ENCODE measurements at regions of chr3 and their contacts with region 1.

Region 1: DNA sequence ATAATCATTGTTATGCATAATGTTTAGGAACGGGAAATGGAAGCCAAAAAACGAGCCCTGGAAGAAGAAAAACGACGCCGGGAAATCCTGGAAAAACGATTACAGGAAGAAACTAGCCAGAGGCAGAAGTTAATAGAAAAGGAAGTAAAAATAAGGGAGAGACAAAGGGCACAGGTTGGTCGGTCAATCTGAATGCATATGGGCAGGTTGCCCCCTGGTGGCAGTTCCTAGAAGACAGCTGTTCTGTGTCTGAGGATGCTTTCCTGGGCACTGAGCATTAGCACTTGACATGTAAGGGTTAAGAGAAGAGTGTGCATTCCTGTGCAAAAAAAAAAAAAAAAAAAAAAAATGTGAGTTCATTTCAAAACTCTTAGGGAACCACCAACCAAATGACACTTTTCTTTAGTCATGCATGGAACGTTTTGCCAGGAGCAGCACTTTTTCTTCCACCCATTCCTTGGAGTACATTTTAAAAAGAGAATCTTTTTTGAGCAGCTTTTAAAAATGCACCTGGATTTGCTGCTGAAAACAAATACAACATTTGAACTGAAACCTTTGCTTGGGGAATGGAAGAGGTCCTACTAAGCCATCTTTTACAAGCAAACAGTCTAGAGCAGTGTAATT is 11.1 kb upstream of the ABHD10 start:
- DNase-seq: peak; percentile 31 to 84
- ATAC-seq: peak; percentile 92 to 97
- H3K4me3 ChIP-seq: no peak overlapping the region
- H3K27ac ChIP-seq: peak overlapping the region; percentile 50 to 79
- H3K4me1 ChIP-seq: peaks cover 25% of the 10 kb centered on the region
- CTCF ChIP-seq: peak; percentile 92
- EP300 ChIP-seq: no peak
- POLR2A ChIP-seq: no peak
- RAD21 ChIP-seq: peak; percentile 95 to 98

Region 2: DNA sequence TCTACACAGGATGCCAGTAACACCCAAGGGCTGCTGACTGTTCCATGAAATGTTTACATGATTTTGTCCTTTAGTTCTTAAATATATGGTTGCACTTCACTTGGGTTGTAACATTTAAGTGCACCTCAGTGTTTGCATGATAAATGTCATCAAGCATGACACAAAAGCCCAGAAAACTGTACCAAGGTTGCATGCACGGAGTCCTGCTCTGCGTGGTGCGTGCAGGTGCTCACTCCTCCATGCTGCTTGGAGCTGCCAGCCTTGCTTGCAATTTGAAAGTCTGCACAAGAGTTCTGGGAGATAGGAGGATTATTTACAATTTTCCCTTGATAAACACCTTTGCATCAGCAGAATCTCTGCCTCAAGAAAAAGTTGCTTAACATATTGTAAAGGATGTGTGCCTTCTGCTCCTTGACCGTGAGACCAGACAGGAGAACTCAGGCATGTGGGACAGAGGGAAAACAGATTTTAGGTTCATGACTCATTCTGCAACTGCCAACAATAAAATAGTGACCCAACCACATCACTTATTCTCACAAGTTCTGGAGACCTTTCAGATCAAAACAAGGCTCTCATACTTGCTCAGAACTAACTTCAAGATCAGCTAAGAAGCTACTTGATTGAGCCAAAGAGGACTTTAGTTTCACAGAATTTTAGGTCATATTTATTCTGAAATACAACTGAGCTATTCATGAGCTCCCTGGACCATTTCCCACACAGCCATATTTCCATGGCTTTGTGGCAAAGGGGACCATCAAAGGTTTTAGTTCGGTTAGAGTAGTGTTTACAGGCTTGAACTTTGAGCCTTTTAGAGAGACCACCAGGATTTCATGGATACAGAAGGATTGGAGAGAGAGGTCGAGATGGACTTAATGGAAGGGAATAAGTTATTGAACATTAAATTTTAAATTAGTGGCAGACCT is 244.2 kb before region 1 on chr3:
- CTCF ChIA-PET with region 1: interaction called, 312 read pairs
- POLR2A ChIA-PET with region 1: no interaction called
- DNase-seq: no peak
- ATAC-seq: peak in 1 of 2 experiments; percentile 30; a peak in 1 of 6 replicates
- H3K4me3 ChIP-seq: no peak overlapping the region
- H3K27ac ChIP-seq: peak overlapping the region in 1 of 2 experiments; percentile 22; a peak in 1 of 6 replicates
- H3K4me1 ChIP-seq: peaks cover 18% of the 10 kb centered on the region
- CTCF ChIP-seq: no peak
- EP300 ChIP-seq: no peak
- POLR2A ChIP-seq: no peak
- RAD21 ChIP-seq: no peak

Region 3: GRCh38 chr3:111895079-111895478 is 72.7 kb before region 1 on chr3:
- CTCF ChIA-PET with region 1: interaction called, 81 read pairs
- POLR2A ChIA-PET with region 1: no interaction called
- DNase-seq: peak; percentile 47 to 65
- ATAC-seq: peak; percentile 87 to 92
- H3K4me3 ChIP-seq: no peak overlapping the region
- H3K27ac ChIP-seq: peak overlapping the region in 1 of 2 experiments; percentile 72; a peak in 2 of 6 replicates
- H3K4me1 ChIP-seq: peaks cover 24% of the 10 kb centered on the region
- CTCF ChIP-seq: peak; percentile 67
- EP300 ChIP-seq: no peak
- POLR2A ChIP-seq: no peak
- RAD21 ChIP-seq: peak; percentile 75 to 77

Region 4: GRCh38 chr3:111978493-111979433 is 11.0 kb after region 1 on chr3 and contains the start of gene ABHD10:
- CTCF ChIA-PET with region 1: interaction called, 20 read pairs
- POLR2A ChIA-PET with region 1: interaction called, 6 read pairs
- DNase-seq: peak; percentile 87 to 99
- ATAC-seq: peak; percentile 96 to 98
- H3K4me3 ChIP-seq: peak within 1 kb of the TSS; percentile 62
- H3K27ac ChIP-seq: peak within 1 kb of the TSS; percentile 84 to 94
- H3K4me1 ChIP-seq: peaks cover 32% of the 10 kb centered on the region
- CTCF ChIP-seq: no peak
- EP300 ChIP-seq: no peak
- POLR2A ChIP-seq: peak; percentile 97
- RAD21 ChIP-seq: no peak
- polyA plus RNA-seq, gene ABHD10: 39.7 and 42.1 TPM in 2 replicates